Activated T-helper 1 cell treated with anti-CD3 and anti-CD28 coated beads, Interleukin-12 subunit alpha, Interleukin-12 subunit beta, Interleukin-2, Interleukin-4 antibody, amounts not matched to agents 30 ng/mL and 10 ng/mL and 1 ng/mL, durations not matched to agents 14 hours and 24 hours and 36 hours (primary cell): ENCODE measurements at regions of chr17 and their contacts with region 1.

Region 1: DNA sequence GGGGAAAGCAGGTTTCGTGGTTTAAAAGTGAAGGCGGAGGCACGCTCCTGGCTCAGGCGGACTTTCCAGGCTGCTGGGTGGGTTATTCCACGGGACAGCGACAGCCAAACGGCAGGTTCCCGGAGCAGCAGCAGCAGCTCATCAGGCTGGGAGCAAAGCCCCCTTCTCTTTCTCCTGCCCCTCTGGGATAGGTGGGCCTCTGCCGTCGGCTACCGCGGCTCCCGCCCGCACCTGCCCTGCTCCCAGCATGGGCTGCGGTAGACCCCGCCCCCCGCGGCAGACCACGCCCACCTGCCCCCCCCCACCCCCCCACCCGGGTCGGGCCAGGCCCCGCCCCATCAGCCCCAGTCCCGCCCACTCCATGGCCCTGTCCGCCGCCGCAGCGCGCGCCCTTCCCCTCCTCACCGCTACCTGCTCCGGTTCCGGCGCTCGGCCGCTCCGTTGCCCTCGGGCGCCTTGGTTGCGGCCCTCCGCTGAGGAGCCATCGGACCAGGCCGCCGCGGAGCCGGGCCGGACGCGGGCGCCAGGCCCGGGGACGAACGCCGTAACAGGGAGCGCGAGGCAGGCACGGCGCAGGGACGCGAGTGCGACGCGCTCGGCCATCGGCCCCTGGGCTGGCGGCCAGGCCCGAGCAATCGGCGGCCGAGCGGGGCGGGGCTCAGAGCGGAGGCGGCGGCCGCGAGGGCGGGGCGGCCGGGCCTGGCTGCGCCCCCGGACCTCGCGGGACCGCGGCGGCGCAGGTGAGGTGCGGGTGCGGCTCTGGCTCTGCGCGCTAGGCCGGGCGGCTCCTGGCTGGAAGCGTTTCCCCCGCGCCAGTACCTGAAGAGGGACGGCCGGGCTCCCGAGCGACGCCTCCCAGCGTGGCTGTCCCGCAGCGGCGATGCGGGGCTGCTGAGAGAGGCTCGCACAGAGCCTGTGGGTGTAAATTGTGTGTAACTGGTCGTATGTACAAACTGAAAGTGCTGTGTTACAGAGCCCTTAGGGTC is at the starts of genes HEXD and OGFOD3:
- DNase-seq: peak; percentile 85
- H3K4me3 Mint-ChIP-seq: peak within 1 kb of the TSS; percentile 82
- H3K27ac Mint-ChIP-seq: peak within 1 kb of the TSS; percentile 61
- H3K4me1 Mint-ChIP-seq: peaks cover 24% of the 10 kb centered on the region
- H3K27me3 Mint-ChIP-seq: no peaks in the 10 kb centered on the region
- total RNA-seq, gene HEXD: 30.5 and 33.0 TPM in 2 replicates
- total RNA-seq, gene OGFOD3: 28.7 and 34.7 TPM in 2 replicates

Region 2: GRCh38 chr17:82193520-82194220 is 224.6 kb before region 1 on chr17:
- intact Hi-C with region 1: no loop called
- DNase-seq: no peak
- H3K4me3 Mint-ChIP-seq: no peak overlapping the region
- H3K27ac Mint-ChIP-seq: no peak overlapping the region
- H3K4me1 Mint-ChIP-seq: peaks cover 23% of the 10 kb centered on the region
- H3K27me3 Mint-ChIP-seq: no peaks in the 10 kb centered on the region

Region 3: DNA sequence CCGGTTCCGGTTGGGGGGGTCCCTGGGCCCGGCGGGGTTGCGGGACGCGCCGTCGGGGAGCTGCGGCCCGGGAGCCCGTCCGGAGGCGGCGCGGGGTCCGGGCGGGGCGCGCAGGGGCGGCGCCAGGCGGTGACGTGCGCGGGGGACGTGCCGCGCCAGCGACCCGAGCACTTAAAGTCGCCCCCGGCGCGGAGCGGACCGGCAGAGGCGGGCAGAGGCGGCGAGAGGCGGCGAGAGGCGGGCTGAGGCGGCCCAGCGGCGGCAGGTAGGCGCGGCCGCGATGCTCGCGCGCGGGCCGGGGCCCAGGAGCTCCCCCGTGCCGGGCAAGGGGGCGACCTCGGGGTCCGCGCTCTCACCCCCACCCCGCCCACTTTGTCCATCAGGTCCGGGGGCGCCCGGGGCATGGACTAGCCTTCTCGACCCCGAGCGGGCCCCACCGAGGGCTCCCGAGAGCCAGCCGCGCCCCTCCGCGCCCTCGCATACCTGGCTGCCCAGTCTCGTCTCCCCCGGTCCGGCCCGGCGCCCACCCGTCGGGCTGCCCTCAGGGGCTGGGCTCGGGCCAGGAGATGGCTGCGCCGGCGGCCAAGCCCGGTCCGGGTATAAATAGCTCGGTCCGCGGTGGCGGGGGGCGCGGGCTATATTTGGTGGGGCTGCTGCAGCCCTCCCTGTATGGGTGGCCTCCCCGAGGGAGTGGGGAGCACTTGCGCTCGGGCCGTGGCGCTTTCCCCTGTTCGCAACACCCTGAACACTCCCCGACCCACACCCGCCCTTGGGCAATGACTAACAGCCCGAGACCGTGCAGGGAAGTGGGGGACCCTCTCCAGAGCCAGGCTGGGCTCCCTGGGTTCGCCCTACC is 189.2 kb before region 1 on chr17 and contains the start of gene SLC16A3:
- intact Hi-C with region 1: loop called (anchors 2 kb)
- DNase-seq: peak; percentile 72
- H3K4me3 Mint-ChIP-seq: peak within 1 kb of the TSS; percentile 94
- H3K27ac Mint-ChIP-seq: peak within 1 kb of the TSS; percentile 90
- H3K4me1 Mint-ChIP-seq: peaks cover 5% of the 10 kb centered on the region
- H3K27me3 Mint-ChIP-seq: no peaks in the 10 kb centered on the region
- total RNA-seq, gene SLC16A3: 111 and 115 TPM in 2 replicates

Region 4: GRCh38 chr17:82351716-82352488 is 66.4 kb before region 1 on chr17:
- intact Hi-C with region 1: loop called (anchors 1 kb)
- DNase-seq: peak; percentile 73
- H3K4me3 Mint-ChIP-seq: no peak overlapping the region
- H3K27ac Mint-ChIP-seq: no peak overlapping the region
- H3K4me1 Mint-ChIP-seq: no peaks in the 10 kb centered on the region
- H3K27me3 Mint-ChIP-seq: no peaks in the 10 kb centered on the region

Region 5: GRCh38 chr17:82370471-82371332 is 47.6 kb before region 1 on chr17:
- intact Hi-C with region 1: no loop called
- DNase-seq: no peak
- H3K4me3 Mint-ChIP-seq: peak overlapping the region; percentile 71
- H3K27ac Mint-ChIP-seq: no peak overlapping the region
- H3K4me1 Mint-ChIP-seq: peaks cover 21% of the 10 kb centered on the region
- H3K27me3 Mint-ChIP-seq: peaks cover 43% of the 10 kb centered on the region

Region 6: DNA sequence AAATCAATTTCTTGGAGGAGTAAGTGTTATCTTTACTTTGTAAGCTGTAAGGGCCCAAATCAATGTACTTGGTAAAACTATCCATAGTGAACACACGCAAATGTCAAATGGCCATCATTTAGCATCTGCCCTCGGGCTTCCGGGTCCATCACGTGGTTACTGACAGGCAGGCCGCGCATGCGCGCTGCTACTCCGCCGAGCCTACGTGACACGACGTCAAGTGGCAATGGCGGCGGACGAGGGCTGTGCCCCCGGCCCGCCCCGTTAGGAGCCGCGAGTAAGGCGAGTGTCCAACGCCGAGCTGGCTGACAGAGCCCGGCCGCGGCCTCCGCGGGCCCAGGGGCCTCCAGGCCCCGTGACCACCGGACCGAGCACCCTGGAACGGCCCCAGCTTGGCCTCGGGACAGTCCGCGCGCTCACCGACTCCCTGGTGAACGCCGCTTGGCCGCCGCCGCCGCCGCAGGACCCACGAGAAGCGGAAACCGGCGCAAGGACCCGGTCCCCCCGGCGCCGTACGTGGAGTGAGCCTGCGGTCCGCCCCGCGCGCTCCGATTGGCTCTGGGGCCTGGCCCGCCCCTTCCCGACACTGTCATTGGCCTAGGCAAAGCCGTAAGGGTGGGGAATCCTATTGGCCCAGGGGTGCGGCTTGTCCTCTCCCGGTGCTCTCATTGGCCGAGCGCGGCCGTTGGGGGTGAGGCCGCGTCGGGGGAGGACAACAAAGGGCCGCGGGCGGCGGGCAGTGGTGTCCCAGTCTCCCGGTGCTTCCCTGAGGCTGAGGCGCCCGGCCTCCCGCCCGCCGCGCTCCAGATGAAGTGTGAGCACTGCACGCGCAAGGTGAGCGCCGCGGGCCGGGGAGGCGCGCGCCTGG is 39.9 kb after region 1 on chr17 and contains the start of gene NARF:
- intact Hi-C with region 1: loop called (anchors 2 kb)
- DNase-seq: peak; percentile 99
- H3K4me3 Mint-ChIP-seq: peak within 1 kb of the TSS; percentile 96
- H3K27ac Mint-ChIP-seq: peak within 1 kb of the TSS; percentile 95
- H3K4me1 Mint-ChIP-seq: peaks cover 45% of the 10 kb centered on the region
- H3K27me3 Mint-ChIP-seq: no peaks in the 10 kb centered on the region
- total RNA-seq, gene NARF: 99.0 and 103 TPM in 2 replicates

Region 7: GRCh38 chr17:82551779-82552457 is 133.6 kb after region 1 on chr17:
- intact Hi-C with region 1: loop called (anchors 5 kb)
- DNase-seq: peak; percentile 75
- H3K4me3 Mint-ChIP-seq: no peak overlapping the region
- H3K27ac Mint-ChIP-seq: no peak overlapping the region
- H3K4me1 Mint-ChIP-seq: peaks cover 35% of the 10 kb centered on the region
- H3K27me3 Mint-ChIP-seq: no peaks in the 10 kb centered on the region

Region 8: DNA sequence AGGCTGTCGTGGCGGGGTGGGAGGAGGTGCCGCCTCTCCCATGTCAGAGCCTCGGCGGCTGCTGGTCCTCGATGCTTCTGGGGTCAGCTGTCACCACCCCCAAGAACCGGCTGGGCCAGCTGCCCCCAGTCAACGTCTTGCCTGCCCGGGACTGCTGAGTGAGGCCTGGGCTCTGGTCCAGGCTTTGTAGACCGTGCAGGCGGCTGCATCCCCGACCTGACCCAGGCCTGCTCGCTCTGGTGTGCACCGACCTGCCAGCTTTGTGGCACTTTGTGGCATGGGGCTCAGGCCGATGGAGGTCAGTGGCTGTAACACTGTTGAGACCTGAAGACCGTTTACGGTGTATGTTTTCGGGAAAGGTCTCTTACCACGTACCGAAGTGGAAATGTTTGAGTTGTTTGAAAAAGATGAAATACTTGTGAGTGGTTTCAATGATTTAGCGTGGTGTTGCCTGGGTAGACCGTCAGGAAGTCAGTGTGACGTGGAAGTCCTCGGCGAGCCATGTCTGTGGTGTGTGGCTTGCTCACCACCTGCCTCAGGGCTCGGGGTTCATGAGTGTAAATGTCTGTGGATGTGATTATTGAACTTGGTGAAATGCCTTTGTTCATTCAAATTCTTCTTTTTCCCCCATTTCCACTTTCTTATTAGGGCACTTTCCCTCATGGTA is 474.7 kb after region 1 on chr17:
- intact Hi-C with region 1: no loop called
- DNase-seq: peak; percentile 63
- H3K4me3 Mint-ChIP-seq: peak overlapping the region; percentile 74
- H3K27ac Mint-ChIP-seq: peak overlapping the region; percentile 83
- H3K4me1 Mint-ChIP-seq: peaks cover 30% of the 10 kb centered on the region
- H3K27me3 Mint-ChIP-seq: peaks cover 3% of the 10 kb centered on the region